Naive thymus-derived CD4-positive, alpha-beta T cell (primary cell): ENCODE measurements at regions of chr12 and their contacts with region 1.

Region 1: GRCh38 chr12:105382771-105383622 is 52.5 kb downstream of the C12orf75 start:
- DNase-seq: peak in 7 of 9 donors; percentile 29 to 65 (median 51)
- ATAC-seq: peak; percentile 73
- H3K4me3 ChIP-seq: no peak overlapping the region
- H3K4me3 Mint-ChIP-seq: no peak overlapping the region
- H3K27ac ChIP-seq: no peak overlapping the region
- H3K27ac Mint-ChIP-seq: no peak overlapping the region
- H3K4me1 ChIP-seq: no peaks in the 10 kb centered on the region
- H3K4me1 Mint-ChIP-seq: no peaks in the 10 kb centered on the region
- H3K27me3 ChIP-seq: no peaks in the 10 kb centered on the region
- H3K27me3 Mint-ChIP-seq: no peaks in the 10 kb centered on the region

Region 2: GRCh38 chr12:104201238-104202001 is 1181.6 kb before region 1 on chr12:
- CTCF ChIA-PET with region 1: no interaction called
- POLR2A ChIA-PET with region 1: no interaction called
- intact Hi-C with region 1: loop called in 1 of 2 experiments (anchors 10 kb)
- DNase-seq: peak; percentile 8 to 72 (median 59)
- ATAC-seq: peak; percentile 78
- H3K4me3 ChIP-seq: no peak overlapping the region
- H3K4me3 Mint-ChIP-seq: peak overlapping the region in 1 of 10 donors; percentile 54
- H3K27ac ChIP-seq: no peak overlapping the region
- H3K27ac Mint-ChIP-seq: no peak overlapping the region
- H3K4me1 ChIP-seq: no peaks in the 10 kb centered on the region
- H3K4me1 Mint-ChIP-seq: peaks cover 0 to 4% (median 3%) of the 10 kb centered on the region in 7 donors
- H3K27me3 ChIP-seq: no peaks in the 10 kb centered on the region
- H3K27me3 Mint-ChIP-seq: peaks cover 5 to 24% (median 9%) of the 10 kb centered on the region in 5 donors

Region 3: DNA sequence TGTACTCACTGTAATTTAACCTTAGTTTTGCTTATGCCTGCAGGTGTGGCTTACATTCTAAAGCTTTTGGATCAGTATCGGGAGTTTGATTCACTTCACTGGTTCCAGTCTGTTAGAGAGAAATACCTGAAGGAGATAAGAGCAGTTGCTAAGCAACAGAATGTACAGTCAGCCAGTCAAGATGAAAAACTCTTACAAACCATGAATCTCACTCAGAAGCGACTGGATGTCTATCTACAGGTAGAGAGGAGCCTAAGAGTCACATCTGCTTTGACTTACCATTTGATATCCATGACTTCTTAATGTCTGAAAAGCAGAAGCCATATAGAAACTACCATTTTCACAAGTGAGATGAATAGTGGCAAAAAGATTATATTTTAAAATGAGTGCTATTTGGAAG is 218.9 kb before region 1 on chr12:
- CTCF ChIA-PET with region 1: no interaction called
- POLR2A ChIA-PET with region 1: no interaction called
- intact Hi-C with region 1: loop called in 1 of 2 experiments (anchors 2 kb)
- DNase-seq: no peak
- ATAC-seq: no peak
- H3K4me3 ChIP-seq: no peak overlapping the region
- H3K4me3 Mint-ChIP-seq: no peak overlapping the region
- H3K27ac ChIP-seq: peak overlapping the region; percentile 1
- H3K27ac Mint-ChIP-seq: peak overlapping the region in 3 of 9 donors; percentile 13 to 63 (median 51)
- H3K4me1 ChIP-seq: no peaks in the 10 kb centered on the region
- H3K4me1 Mint-ChIP-seq: peaks cover 0 to 12% (median 2%) of the 10 kb centered on the region in 7 donors
- H3K27me3 ChIP-seq: no peaks in the 10 kb centered on the region
- H3K27me3 Mint-ChIP-seq: no peaks in the 10 kb centered on the region

Region 4: DNA sequence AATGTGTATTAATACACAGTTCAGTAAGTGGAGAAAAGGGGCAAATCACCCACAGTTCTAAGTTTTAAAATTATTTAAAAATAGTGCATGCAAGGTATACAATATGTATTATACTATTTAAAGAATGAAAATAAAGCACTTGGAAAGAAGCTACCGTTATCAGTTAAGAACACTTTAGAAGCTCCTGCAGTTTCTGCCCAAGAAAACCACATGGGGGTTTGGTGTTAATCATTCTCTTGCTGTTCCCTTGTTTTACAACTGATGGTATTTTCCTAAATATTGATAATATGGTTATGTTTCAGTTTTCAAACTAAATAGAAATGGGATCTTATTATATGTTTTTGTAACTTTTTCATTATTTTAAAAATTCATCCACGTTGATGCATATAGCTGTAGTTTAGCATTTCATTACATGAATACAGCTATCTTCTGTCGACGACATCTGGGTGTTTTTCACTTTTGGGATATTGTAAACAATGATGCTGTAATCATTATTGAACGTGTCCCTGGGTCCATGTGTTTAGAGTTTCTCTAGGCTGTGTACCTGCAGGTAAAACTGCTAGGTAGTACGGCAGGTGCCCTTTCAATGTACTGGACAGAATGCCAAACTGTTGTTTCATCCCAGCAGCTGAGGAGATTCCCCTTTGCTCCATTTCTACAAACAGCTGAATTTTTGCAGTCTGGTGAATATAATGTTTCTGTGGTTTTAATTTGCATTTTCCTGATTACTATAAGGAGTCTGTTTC is 211.1 kb before region 1 on chr12:
- CTCF ChIA-PET with region 1: no interaction called
- POLR2A ChIA-PET with region 1: no interaction called
- intact Hi-C with region 1: loop called in 1 of 2 experiments (anchors 10 kb)
- DNase-seq: no peak
- ATAC-seq: no peak
- H3K4me3 ChIP-seq: no peak overlapping the region
- H3K4me3 Mint-ChIP-seq: no peak overlapping the region
- H3K27ac ChIP-seq: no peak overlapping the region
- H3K27ac Mint-ChIP-seq: peak overlapping the region in 8 of 9 donors; percentile 6 to 70 (median 55)
- H3K4me1 ChIP-seq: no peaks in the 10 kb centered on the region
- H3K4me1 Mint-ChIP-seq: peaks cover 0 to 9% (median 3%) of the 10 kb centered on the region in 7 donors
- H3K27me3 ChIP-seq: no peaks in the 10 kb centered on the region
- H3K27me3 Mint-ChIP-seq: no peaks in the 10 kb centered on the region

Region 5: DNA sequence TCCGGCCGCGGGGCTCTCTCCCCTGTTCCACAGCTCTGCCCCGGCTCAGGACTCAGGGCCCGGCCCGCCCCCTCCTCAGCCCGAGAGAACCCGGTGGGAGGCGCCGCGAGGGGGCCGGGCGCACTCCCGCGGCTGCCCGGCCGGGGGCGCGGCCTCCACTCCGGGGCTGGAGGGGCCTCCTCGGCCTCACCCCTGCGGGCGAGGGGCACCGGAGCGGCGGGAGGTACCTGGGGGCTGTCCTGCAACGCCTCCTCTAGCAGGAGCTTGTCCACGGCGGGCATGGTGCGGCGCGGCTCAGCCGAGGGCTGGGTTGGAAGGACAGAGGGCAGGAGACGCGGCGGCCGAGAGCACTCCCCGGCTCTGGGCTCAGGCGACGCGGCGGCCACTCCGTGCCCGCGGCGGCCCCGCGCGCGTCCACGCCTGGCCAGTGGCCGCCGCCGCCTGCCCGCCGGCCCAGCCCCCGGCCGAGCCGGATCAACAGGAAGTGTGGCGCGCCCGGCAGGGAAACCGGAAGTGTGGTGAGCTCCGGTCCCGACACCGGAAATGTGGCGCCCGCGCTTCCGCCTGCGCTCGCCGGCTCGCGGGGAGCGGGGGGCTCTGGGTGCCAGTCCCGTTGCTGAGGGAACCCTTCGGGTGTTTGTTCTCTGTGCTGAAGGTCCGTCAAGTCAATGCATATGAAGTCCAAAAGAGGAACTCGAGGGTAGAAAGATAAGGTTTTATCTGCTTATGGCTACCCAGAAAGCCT is 147.1 kb before region 1 on chr12 and contains the start of gene APPL2:
- CTCF ChIA-PET with region 1: no interaction called
- POLR2A ChIA-PET with region 1: no interaction called
- intact Hi-C with region 1: loop called (anchors 1 to 2 kb)
- DNase-seq: peak; percentile 52 to 81 (median 71)
- ATAC-seq: peak; percentile 86
- H3K4me3 ChIP-seq: peak within 1 kb of the TSS; percentile 71
- H3K4me3 Mint-ChIP-seq: peak within 1 kb of the TSS in 9 of 10 donors; percentile 89 to 95 (median 93)
- H3K27ac ChIP-seq: peak within 1 kb of the TSS; percentile 78
- H3K27ac Mint-ChIP-seq: peak within 1 kb of the TSS; percentile 86 to 96 (median 91)
- H3K4me1 ChIP-seq: peaks cover 25 to 39% of the 10 kb centered on the region in 2 donors
- H3K4me1 Mint-ChIP-seq: peaks cover 42 to 54% (median 48%) of the 10 kb centered on the region in 7 donors
- H3K27me3 ChIP-seq: no peaks in the 10 kb centered on the region
- H3K27me3 Mint-ChIP-seq: peaks cover 0 to 3% (median 0%) of the 10 kb centered on the region in 5 donors
- total RNA-seq, gene APPL2: 31.6 to 74.5 (median 58.3) TPM

Region 6: DNA sequence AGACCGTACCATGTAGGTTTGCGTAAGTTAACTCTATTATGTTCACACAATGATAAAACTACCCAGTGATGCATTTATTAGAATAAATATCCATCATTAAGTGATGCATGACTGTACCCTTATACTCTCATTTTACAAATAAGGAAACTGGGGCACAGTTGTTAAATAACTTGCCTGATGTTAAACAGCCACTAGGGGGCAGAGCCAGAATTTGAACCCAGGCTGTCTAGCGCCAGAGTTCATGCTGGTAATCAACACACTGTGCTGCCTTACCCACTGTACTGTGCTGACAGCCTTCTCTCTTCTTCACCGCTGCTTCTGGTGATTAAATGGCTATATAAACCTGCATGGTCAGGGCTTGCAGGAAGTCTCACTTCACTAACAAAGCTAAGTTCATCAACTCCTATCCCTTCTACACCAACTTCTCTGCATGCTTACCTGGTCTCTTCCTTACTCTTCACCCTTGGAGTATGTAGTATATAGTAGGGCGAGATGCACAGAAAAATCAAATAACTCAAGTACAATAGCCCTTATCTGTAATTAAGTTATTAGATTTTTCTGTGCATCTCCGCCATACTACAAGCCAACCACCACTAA is 103.4 kb before region 1 on chr12:
- CTCF ChIA-PET with region 1: interaction called, 4 read pairs
- POLR2A ChIA-PET with region 1: no interaction called
- intact Hi-C with region 1: loop called (anchors 1 kb)
- DNase-seq: peak in 6 of 9 donors; percentile 10 to 39 (median 25)
- ATAC-seq: peak; percentile 72
- H3K4me3 ChIP-seq: no peak overlapping the region
- H3K4me3 Mint-ChIP-seq: no peak overlapping the region
- H3K27ac ChIP-seq: no peak overlapping the region
- H3K27ac Mint-ChIP-seq: no peak overlapping the region
- H3K4me1 ChIP-seq: no peaks in the 10 kb centered on the region
- H3K4me1 Mint-ChIP-seq: peaks cover 0 to 6% (median 0%) of the 10 kb centered on the region in 7 donors
- H3K27me3 ChIP-seq: no peaks in the 10 kb centered on the region
- H3K27me3 Mint-ChIP-seq: peaks cover 0 to 14% (median 4%) of the 10 kb centered on the region in 5 donors

Region 7: GRCh38 chr12:105319691-105320209 is 63.2 kb before region 1 on chr12:
- CTCF ChIA-PET with region 1: interaction called, 6 read pairs
- POLR2A ChIA-PET with region 1: no interaction called
- intact Hi-C with region 1: loop called (anchors 1 to 2 kb)
- DNase-seq: peak in 5 of 9 donors; percentile 8 to 29 (median 19)
- ATAC-seq: peak; percentile 63
- H3K4me3 ChIP-seq: no peak overlapping the region
- H3K4me3 Mint-ChIP-seq: no peak overlapping the region
- H3K27ac ChIP-seq: no peak overlapping the region
- H3K27ac Mint-ChIP-seq: no peak overlapping the region
- H3K4me1 ChIP-seq: no peaks in the 10 kb centered on the region
- H3K4me1 Mint-ChIP-seq: peaks cover 11 to 67% (median 17%) of the 10 kb centered on the region in 7 donors
- H3K27me3 ChIP-seq: no peaks in the 10 kb centered on the region
- H3K27me3 Mint-ChIP-seq: no peaks in the 10 kb centered on the region